B cell (primary cell): ENCODE measurements at regions of chr13 and their contacts with region 1.

Region 1: GRCh38 chr13:110471833-110472162 is 89.7 kb downstream of the RAB20 start:
- DNase-seq: peak; percentile 89
- ATAC-seq: peak; percentile 94
- H3K4me3 ChIP-seq: peak overlapping the region in 2 of 5 experiments; percentile 17 to 19
- H3K4me3 Mint-ChIP-seq: peak overlapping the region; percentile 85
- H3K27ac ChIP-seq: peak overlapping the region; percentile 80 to 83
- H3K27ac Mint-ChIP-seq: peak overlapping the region; percentile 89
- H3K4me1 ChIP-seq: peaks cover 38 to 50% of the 10 kb centered on the region in 2 donors
- H3K4me1 Mint-ChIP-seq: peaks cover 49% of the 10 kb centered on the region
- H3K27me3 ChIP-seq: peaks cover 0 to 2% (median 0%) of the 10 kb centered on the region in 4 experiments
- H3K27me3 Mint-ChIP-seq: no peaks in the 10 kb centered on the region
- CTCF ChIP-seq: no peak

Region 2: GRCh38 chr13:110412132-110412914 is 59.5 kb before region 1 on chr13:
- CTCF ChIA-PET with region 1: no interaction called
- POLR2A ChIA-PET with region 1: no interaction called
- intact Hi-C with region 1: no loop called
- DNase-seq: peak; percentile 63
- ATAC-seq: peak; percentile 83
- H3K4me3 ChIP-seq: no peak overlapping the region
- H3K4me3 Mint-ChIP-seq: no peak overlapping the region
- H3K27ac ChIP-seq: no peak overlapping the region
- H3K27ac Mint-ChIP-seq: no peak overlapping the region
- H3K4me1 ChIP-seq: peaks cover 0 to 3% of the 10 kb centered on the region in 2 donors
- H3K4me1 Mint-ChIP-seq: peaks cover 4% of the 10 kb centered on the region
- H3K27me3 ChIP-seq: peaks cover 0 to 15% (median 6%) of the 10 kb centered on the region in 4 experiments
- H3K27me3 Mint-ChIP-seq: peaks cover 40% of the 10 kb centered on the region
- CTCF ChIP-seq: peak; percentile 84

Region 3: GRCh38 chr13:110525328-110526319 is 53.8 kb after region 1 on chr13:
- CTCF ChIA-PET with region 1: no interaction called
- POLR2A ChIA-PET with region 1: no interaction called
- intact Hi-C with region 1: loop called (anchors 5 kb)
- DNase-seq: peak; percentile 53
- ATAC-seq: peak; percentile 72
- H3K4me3 ChIP-seq: no peak overlapping the region
- H3K4me3 Mint-ChIP-seq: peak overlapping the region; percentile 37
- H3K27ac ChIP-seq: no peak overlapping the region
- H3K27ac Mint-ChIP-seq: peak overlapping the region; percentile 37
- H3K4me1 ChIP-seq: peaks cover 20 to 21% of the 10 kb centered on the region in 2 donors
- H3K4me1 Mint-ChIP-seq: peaks cover 27% of the 10 kb centered on the region
- H3K27me3 ChIP-seq: peaks cover 0 to 5% (median 0%) of the 10 kb centered on the region in 4 experiments
- H3K27me3 Mint-ChIP-seq: no peaks in the 10 kb centered on the region
- CTCF ChIP-seq: no peak

Region 4: GRCh38 chr13:110561344-110562035 is 89.7 kb after region 1 on chr13 and contains the start of gene RAB20:
- CTCF ChIA-PET with region 1: no interaction called
- POLR2A ChIA-PET with region 1: interaction called, 4 read pairs
- intact Hi-C with region 1: loop called (anchors 5 kb)
- DNase-seq: peak; percentile 74
- ATAC-seq: peak; percentile 81
- H3K4me3 ChIP-seq: peak within 1 kb of the TSS; percentile 59 to 92 (median 70)
- H3K4me3 Mint-ChIP-seq: peak within 1 kb of the TSS; percentile 91
- H3K27ac ChIP-seq: peak within 1 kb of the TSS; percentile 12 to 51
- H3K27ac Mint-ChIP-seq: peak within 1 kb of the TSS; percentile 79
- H3K4me1 ChIP-seq: peaks cover 13 to 15% of the 10 kb centered on the region in 2 donors
- H3K4me1 Mint-ChIP-seq: peaks cover 34% of the 10 kb centered on the region
- H3K27me3 ChIP-seq: peaks cover 0 to 5% (median 0%) of the 10 kb centered on the region in 4 experiments
- H3K27me3 Mint-ChIP-seq: peaks cover 10% of the 10 kb centered on the region
- CTCF ChIP-seq: no peak
- total RNA-seq, gene RAB20: 4.6 and 5.1 TPM in 2 replicates

Region 5: DNA sequence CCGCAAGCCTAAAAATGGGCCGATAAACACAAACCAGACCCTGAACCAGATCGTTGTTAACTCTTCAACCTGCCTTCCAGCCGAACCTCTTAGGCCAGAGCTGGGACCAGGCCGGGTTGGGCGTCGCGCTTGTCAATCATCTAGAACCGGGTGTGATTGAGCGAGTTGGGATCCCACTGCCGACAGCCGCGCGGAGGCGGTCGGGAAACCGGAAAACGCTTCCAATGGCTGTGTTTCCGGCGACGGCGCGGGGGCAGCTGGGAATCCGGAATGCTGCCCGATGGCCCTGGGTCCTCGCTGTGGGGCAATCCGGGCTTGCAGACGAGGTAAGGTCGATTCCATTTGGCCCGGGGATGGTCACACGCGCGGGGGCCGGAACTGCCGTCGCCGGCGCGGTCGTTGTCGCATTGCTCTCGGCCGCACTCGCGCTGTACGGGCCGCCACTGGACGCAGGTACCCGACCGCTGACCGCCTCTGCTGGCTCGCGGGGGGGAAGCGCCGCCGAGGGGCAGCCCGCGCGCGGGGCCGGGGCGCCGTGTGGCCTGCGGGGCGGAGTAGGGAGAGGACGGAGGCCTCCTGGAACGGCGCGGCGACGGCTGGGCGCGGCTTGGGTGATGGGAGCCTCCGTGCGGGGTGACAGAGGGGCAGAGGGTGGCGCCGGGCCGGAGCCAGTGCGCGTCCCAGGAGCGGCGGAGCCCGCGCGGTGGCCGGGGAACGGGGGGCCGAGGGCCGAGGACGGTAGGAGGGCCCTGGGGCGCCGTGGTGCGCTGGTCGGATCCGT is 143.7 kb after region 1 on chr13 and contains the start of gene NAXD:
- CTCF ChIA-PET with region 1: no interaction called
- POLR2A ChIA-PET with region 1: no interaction called
- intact Hi-C with region 1: loop called (anchors 5 kb)
- DNase-seq: peak; percentile 81
- ATAC-seq: peak; percentile 83
- H3K4me3 ChIP-seq: peak within 1 kb of the TSS; percentile 44 to 84 (median 77)
- H3K4me3 Mint-ChIP-seq: peak within 1 kb of the TSS; percentile 96
- H3K27ac ChIP-seq: peak within 1 kb of the TSS; percentile 31 to 74
- H3K27ac Mint-ChIP-seq: peak within 1 kb of the TSS; percentile 94
- H3K4me1 ChIP-seq: peaks cover 14 to 26% of the 10 kb centered on the region in 2 donors
- H3K4me1 Mint-ChIP-seq: peaks cover 36% of the 10 kb centered on the region
- H3K27me3 ChIP-seq: no peaks in the 10 kb centered on the region
- H3K27me3 Mint-ChIP-seq: no peaks in the 10 kb centered on the region
- CTCF ChIP-seq: no peak
- total RNA-seq, gene NAXD: 33.3 and 36.0 TPM in 2 replicates

Region 6: DNA sequence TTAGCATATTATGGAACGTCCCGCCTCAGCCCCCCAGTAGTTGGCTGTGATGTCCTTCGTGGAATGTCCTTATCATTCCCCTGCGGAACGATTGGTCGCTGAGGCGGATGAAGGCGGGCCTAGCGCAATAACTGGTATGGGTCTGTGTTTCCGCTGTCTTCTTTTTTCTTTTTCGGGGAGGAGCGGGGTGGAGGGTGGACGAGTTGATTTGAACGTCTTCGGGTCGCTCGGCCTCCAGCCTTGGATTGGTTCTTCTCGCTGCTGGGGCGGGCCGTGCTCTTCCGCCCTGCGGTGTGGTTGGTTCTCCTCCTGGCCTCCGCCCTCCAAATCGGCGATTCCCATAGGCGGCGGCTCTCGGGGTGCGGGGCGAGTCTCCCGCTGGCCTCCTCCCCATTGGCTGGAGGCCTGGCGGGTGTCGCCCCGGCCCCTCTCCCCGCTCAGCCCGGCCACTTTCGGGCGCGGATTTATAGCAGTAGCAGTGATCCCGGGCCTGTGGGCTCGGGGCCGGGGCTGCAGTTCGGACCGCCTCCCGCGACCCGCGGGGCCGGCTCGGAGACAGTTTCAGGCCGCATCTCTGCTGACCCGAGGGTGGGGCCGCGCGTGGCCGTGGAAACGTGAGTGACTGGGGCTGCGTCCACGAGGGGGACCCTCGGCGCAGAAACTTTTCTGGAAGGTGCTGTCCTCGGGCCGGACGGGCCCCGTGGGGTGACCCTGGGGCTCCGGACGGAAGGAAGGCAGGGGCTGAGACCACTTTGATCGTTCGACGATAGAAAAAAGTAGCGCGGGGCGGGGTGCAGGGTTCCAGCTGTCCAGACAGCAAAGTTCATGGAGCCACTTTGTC is 243.8 kb after region 1 on chr13:
- CTCF ChIA-PET with region 1: no interaction called
- POLR2A ChIA-PET with region 1: no interaction called
- intact Hi-C with region 1: loop called (anchors 1 kb)
- DNase-seq: peak; percentile 99
- ATAC-seq: peak; percentile 56
- H3K4me3 ChIP-seq: peak overlapping the region; percentile 89 to 100 (median 100)
- H3K4me3 Mint-ChIP-seq: peak overlapping the region; percentile 96
- H3K27ac ChIP-seq: peak overlapping the region; percentile 82 to 86
- H3K27ac Mint-ChIP-seq: peak overlapping the region; percentile 96
- H3K4me1 ChIP-seq: peaks cover 28 to 30% of the 10 kb centered on the region in 2 donors
- H3K4me1 Mint-ChIP-seq: peaks cover 35% of the 10 kb centered on the region
- H3K27me3 ChIP-seq: no peaks in the 10 kb centered on the region
- H3K27me3 Mint-ChIP-seq: no peaks in the 10 kb centered on the region
- CTCF ChIP-seq: peak; percentile 30